ENCODE measurements at regions of chr1 and their contacts with region 1.

Region 1: DNA sequence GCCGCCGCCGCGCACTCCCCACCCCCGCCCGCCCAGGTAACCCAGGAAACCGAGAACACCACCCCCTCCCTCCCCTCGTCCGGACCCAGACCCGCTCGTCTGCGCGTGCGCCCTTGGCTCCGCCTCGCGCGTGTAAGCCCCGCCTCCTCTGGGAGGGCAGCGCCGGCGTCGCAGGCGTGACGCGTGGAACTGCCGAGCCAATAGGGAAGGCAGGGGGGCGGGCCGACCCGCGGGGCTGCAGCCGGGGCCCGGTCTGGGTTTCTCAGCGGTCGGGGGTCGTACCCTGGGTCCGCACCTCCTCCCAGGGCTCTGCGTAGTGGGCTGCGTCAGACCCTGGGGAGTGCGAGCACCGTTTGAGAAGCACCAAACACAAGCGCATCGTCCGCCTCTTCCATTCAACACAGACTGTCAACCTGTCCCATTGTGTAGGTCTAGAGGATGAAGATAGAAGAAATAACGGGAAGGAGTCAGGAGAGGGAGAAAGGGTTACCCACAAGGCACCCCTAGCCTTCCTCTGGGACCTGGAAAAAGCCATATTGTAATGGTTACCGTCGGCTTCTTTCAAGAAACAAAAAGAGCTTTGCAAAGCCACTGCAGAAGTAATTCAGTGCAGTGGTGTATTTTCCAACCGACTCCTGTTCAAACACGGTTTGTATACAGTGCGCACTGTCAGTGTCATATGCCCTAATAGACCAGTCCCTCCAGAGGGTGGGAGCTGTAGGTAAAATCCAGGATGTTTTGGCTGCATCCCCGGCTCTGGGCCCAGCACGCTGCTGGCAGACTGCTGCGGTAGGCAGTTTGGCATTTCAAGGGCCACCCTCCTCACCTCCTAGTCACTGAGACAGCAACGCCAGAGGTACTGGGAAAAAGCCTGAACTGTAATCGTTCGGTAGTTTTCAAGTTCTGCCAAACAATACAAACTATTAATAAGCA is 473 bp upstream of the LYST start:
- DNase-seq: peak; percentile 99

Region 2: GRCh38 chr1:235799264-235799663 is 67.9 kb before region 1 on chr1:
- intact Hi-C with region 1: no loop called
- DNase-seq: no peak

Region 3: DNA sequence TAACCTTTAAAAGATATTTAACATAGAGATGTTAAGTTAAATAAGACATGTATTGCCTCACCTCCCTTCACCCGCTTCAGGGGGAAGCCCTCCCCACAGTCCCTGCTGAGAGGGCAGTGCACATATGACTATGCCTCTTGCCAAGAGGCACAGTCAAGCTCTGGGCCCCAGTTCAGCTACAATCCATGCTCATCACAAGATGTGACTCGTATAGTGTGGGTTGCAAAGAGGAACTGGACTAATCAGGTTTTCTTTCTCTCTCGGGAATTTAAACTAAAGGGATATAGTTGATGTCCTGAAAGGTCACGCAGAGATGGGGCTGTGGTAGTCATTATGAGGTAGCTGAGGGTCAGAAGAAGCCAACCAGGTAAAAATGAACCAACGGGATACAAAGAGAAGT is 36.0 kb before region 1 on chr1:
- intact Hi-C with region 1: no loop called
- DNase-seq: no peak

Region 4: GRCh38 chr1:235971571-235972310 is 104.6 kb after region 1 on chr1:
- intact Hi-C with region 1: loop called in 1 of 2 experiments (anchors 10 kb)
- DNase-seq: peak; percentile 98

Region 5: DNA sequence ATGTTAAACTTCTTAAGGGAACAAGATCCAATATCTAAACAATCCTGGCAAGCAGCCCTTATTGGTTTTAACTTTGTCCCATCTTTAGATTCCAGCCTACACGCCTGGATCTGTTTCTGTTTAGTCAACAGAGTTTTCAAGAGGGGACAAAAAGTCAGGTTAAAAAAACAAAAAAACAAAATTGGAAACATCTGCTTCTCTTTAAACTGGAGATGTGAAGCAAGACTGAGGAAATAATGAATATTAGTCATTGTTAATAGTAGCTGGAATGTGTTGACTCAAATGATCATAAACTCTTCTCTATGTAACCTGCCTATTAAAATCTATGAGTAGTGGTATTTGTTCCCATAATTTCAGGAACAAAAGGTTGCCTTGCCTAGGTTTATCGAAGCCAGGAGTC is 142.7 kb after region 1 on chr1:
- intact Hi-C with region 1: no loop called
- DNase-seq: no peak